Right cardiac atrium (tissue), 5 donors: ENCODE measurements at regions of chr10 and their contacts with region 1.

Region 1: GRCh38 chr10:13659897-13660550 is 73.3 kb downstream of the PRPF18 start:
- DNase-seq: peak; percentile 80 to 91 (median 89)
- ATAC-seq: peak; percentile 76
- H3K4me3 ChIP-seq: no peak overlapping the region
- H3K27ac ChIP-seq: peak overlapping the region; percentile 10
- H3K4me1 ChIP-seq: peaks cover 4% of the 10 kb centered on the region
- H3K27me3 ChIP-seq: no peaks in the 10 kb centered on the region

Region 2: GRCh38 chr10:13712837-13713581 is 53.0 kb after region 1 on chr10:
- intact Hi-C with region 1: loop called in 1 of 4 experiments (anchors 10 kb)
- DNase-seq: peak; percentile 88 to 89 (median 89)
- ATAC-seq: peak; percentile 76 to 88
- H3K4me3 ChIP-seq: no peak overlapping the region
- H3K27ac ChIP-seq: peak overlapping the region; percentile 55
- H3K4me1 ChIP-seq: peaks cover 7% of the 10 kb centered on the region
- H3K27me3 ChIP-seq: no peaks in the 10 kb centered on the region

Region 3: GRCh38 chr10:13776861-13777311 is 116.9 kb after region 1 on chr10:
- intact Hi-C with region 1: loop called (anchors 2 to 5 kb)
- DNase-seq: no peak
- ATAC-seq: no peak
- H3K4me3 ChIP-seq: no peak overlapping the region
- H3K27ac ChIP-seq: no peak overlapping the region
- H3K4me1 ChIP-seq: peaks cover 8% of the 10 kb centered on the region
- H3K27me3 ChIP-seq: no peaks in the 10 kb centered on the region